CD4-positive, alpha-beta T cell (primary cell): ENCODE measurements at regions of chr16 and their contacts with region 1.

Region 1: GRCh38 chr16:10314811-10315210 is 71.0 kb upstream of the ATF7IP2 start:
- DNase-seq: peak in 4 of 14 experiments; percentile 23 to 60 (median 55)
- ATAC-seq: peak; percentile 77
- H3K4me3 ChIP-seq: no peak overlapping the region
- H3K4me3 Mint-ChIP-seq: no peak overlapping the region
- H3K27ac ChIP-seq: no peak overlapping the region
- H3K27ac Mint-ChIP-seq: no peak overlapping the region
- H3K4me1 ChIP-seq: peaks cover 3% of the 10 kb centered on the region
- H3K4me1 Mint-ChIP-seq: peaks cover 26% of the 10 kb centered on the region
- H3K27me3 ChIP-seq: no peaks in the 10 kb centered on the region
- H3K27me3 Mint-ChIP-seq: no peaks in the 10 kb centered on the region
- CTCF ChIP-seq: peak; percentile 61

Region 2: DNA sequence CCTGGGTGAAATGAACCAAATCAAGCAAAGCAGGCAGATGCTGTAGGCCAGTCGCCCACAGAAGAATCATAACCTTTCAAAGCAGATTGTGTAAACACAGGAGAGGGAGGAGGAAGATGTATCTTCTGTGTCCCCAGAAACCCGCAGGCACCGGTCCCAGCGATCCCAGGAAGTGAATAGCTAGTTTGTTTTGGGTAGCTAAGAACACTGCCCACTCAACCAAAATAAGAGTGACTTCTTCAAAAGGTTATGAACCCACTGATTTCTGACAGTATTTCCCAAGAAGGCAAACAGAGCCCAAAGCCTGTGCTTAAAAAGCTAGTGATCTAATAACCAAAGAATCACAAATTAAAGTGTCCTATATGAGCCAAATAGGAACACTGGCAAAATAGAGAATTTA is 200.4 kb before region 1 on chr16:
- CTCF ChIA-PET with region 1: no interaction called
- POLR2A ChIA-PET with region 1: no interaction called
- intact Hi-C with region 1: no loop called
- DNase-seq: no peak
- ATAC-seq: no peak
- H3K4me3 ChIP-seq: no peak overlapping the region
- H3K4me3 Mint-ChIP-seq: no peak overlapping the region
- H3K27ac ChIP-seq: no peak overlapping the region
- H3K27ac Mint-ChIP-seq: no peak overlapping the region
- H3K4me1 ChIP-seq: no peaks in the 10 kb centered on the region
- H3K4me1 Mint-ChIP-seq: no peaks in the 10 kb centered on the region
- H3K27me3 ChIP-seq: peaks cover 0 to 2% of the 10 kb centered on the region in 2 experiments
- H3K27me3 Mint-ChIP-seq: no peaks in the 10 kb centered on the region
- CTCF ChIP-seq: no peak

Region 3: GRCh38 chr16:10368969-10369551 is 54.2 kb after region 1 on chr16:
- CTCF ChIA-PET with region 1: interaction called, 3 read pairs
- POLR2A ChIA-PET with region 1: no interaction called
- intact Hi-C with region 1: loop called in 1 of 2 experiments (anchors 5 kb)
- DNase-seq: no peak
- ATAC-seq: no peak
- H3K4me3 ChIP-seq: no peak overlapping the region
- H3K4me3 Mint-ChIP-seq: no peak overlapping the region
- H3K27ac ChIP-seq: no peak overlapping the region
- H3K27ac Mint-ChIP-seq: no peak overlapping the region
- H3K4me1 ChIP-seq: no peaks in the 10 kb centered on the region
- H3K4me1 Mint-ChIP-seq: no peaks in the 10 kb centered on the region
- H3K27me3 ChIP-seq: no peaks in the 10 kb centered on the region
- H3K27me3 Mint-ChIP-seq: no peaks in the 10 kb centered on the region
- CTCF ChIP-seq: no peak

Region 4: GRCh38 chr16:10385725-10386516 is 71.1 kb after region 1 on chr16 and contains the start of gene ATF7IP2:
- CTCF ChIA-PET with region 1: no interaction called
- POLR2A ChIA-PET with region 1: interaction called, 5 read pairs
- intact Hi-C with region 1: loop called in 1 of 2 experiments (anchors 10 kb)
- DNase-seq: peak; percentile 73 to 93 (median 83)
- ATAC-seq: peak; percentile 97
- H3K4me3 ChIP-seq: peak within 1 kb of the TSS; percentile 86
- H3K4me3 Mint-ChIP-seq: peak within 1 kb of the TSS; percentile 100
- H3K27ac ChIP-seq: peak within 1 kb of the TSS; percentile 46 to 69
- H3K27ac Mint-ChIP-seq: peak within 1 kb of the TSS; percentile 91
- H3K4me1 ChIP-seq: peaks cover 30% of the 10 kb centered on the region
- H3K4me1 Mint-ChIP-seq: peaks cover 57% of the 10 kb centered on the region
- H3K27me3 ChIP-seq: no peaks in the 10 kb centered on the region
- H3K27me3 Mint-ChIP-seq: no peaks in the 10 kb centered on the region
- CTCF ChIP-seq: no peak
- total RNA-seq, gene ATF7IP2: 82.9 to 86.9 TPM

Region 5: GRCh38 chr16:10737068-10737625 is 422.3 kb after region 1 on chr16:
- CTCF ChIA-PET with region 1: interaction called, 4 read pairs
- POLR2A ChIA-PET with region 1: no interaction called
- intact Hi-C with region 1: loop called (anchors 1 to 2 kb)
- DNase-seq: peak; percentile 51 to 88 (median 64)
- ATAC-seq: peak; percentile 92
- H3K4me3 ChIP-seq: peak overlapping the region; percentile 24
- H3K4me3 Mint-ChIP-seq: peak overlapping the region; percentile 67
- H3K27ac ChIP-seq: no peak overlapping the region
- H3K27ac Mint-ChIP-seq: peak overlapping the region; percentile 66
- H3K4me1 ChIP-seq: peaks cover 14% of the 10 kb centered on the region
- H3K4me1 Mint-ChIP-seq: peaks cover 6% of the 10 kb centered on the region
- H3K27me3 ChIP-seq: no peaks in the 10 kb centered on the region
- H3K27me3 Mint-ChIP-seq: no peaks in the 10 kb centered on the region
- CTCF ChIP-seq: peak; percentile 89